ENCODE measurements at regions of chr11 and their contacts with region 1.

Region 1: GRCh38 chr11:62081378-62082291 is 42.2 kb upstream of the INCENP start:
- DNase-seq: peak; percentile 19
- H3K4me3 ChIP-seq: no peak overlapping the region
- H3K27me3 ChIP-seq: no peaks in the 10 kb centered on the region
- CTCF ChIP-seq: peak; percentile 87

Region 2: GRCh38 chr11:61792310-61793085 is 289.1 kb before region 1 on chr11 and contains the starts of genes FEN1 and TMEM258:
- CTCF ChIA-PET with region 1: interaction called, 32 read pairs
- POLR2A ChIA-PET with region 1: no interaction called
- DNase-seq: peak; percentile 71
- H3K4me3 ChIP-seq: peak within 1 kb of the TSS; percentile 81
- H3K27me3 ChIP-seq: no peaks in the 10 kb centered on the region
- CTCF ChIP-seq: no peak
- polyA plus RNA-seq, gene FEN1: 11.7 and 13.2 TPM in 2 replicates
- polyA plus RNA-seq, gene TMEM258: 371 and 399 TPM in 2 replicates

Region 3: DNA sequence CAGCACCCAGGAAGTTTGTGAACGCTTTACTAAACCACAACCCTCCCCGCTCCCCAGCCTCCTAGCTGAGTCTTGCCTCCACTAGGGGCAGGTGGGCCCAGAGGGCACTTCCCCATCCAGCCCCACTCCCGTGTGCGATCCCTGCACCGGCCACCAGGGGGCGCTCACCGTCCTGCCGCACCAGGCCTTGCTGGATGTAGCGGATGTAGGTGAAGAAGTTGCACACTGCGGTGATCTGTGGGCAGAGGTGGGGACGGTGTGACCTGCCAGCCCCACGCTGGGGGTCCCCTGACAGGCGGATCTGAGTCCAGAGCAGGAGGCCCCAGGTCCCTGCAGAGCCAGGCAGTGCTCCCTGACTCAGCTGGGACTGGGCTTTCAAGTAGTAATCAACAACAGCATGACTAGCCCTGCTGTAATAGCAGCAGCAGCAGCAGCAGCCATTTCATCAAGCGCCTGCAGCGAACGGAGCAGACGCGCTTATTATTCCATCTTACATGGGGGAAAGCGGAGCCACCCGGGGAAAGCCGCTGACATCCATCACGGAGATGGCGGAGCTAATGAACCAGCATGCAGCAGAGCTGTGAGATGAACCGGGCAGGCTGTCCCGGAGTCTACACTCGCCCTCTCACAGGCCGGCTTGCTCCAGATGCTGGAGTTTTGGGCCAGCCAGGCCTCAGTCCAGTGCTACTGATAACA is 182.3 kb before region 1 on chr11:
- CTCF ChIA-PET with region 1: interaction called, 183 read pairs
- POLR2A ChIA-PET with region 1: no interaction called
- DNase-seq: no peak
- H3K4me3 ChIP-seq: no peak overlapping the region
- H3K27me3 ChIP-seq: no peaks in the 10 kb centered on the region
- CTCF ChIP-seq: peak; percentile 100

Region 4: DNA sequence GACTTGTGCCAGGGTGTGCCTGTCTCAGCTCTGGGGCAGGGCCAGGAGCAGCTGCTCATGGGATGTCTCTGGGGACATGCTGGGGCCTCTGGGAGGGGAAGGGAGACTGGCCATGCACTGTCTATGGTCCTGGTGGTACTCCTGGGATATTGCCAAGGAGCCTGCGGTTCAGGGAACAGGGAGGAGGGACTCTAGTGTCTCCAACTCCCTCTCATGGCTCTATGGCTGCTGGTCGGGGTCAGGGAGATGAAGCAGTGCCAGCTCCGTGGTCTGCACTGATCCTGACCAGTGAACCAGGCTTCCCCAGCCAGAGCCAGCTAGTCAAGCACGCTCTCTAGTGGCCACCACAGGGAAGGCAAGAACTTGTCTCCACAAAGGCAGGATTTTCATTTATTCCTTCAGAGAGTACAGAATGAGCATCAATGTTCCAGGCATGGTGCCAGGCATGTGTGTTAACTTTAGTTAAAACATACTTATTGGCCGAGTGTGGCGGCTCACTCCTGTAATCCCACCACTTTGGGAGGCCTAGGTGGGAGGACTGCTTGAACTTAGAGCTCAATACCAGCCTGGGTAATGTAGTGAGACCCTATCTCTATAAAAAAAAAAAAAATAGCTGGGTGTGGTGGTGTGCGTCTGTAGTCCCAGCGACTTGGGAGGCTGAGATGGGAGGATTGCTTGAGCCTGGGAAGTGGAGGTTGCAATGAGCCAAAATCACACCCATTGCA is 134.0 kb before region 1 on chr11:
- CTCF ChIA-PET with region 1: interaction called, 62 read pairs
- POLR2A ChIA-PET with region 1: no interaction called
- DNase-seq: no peak
- H3K4me3 ChIP-seq: no peak overlapping the region
- H3K27me3 ChIP-seq: peaks cover 2% of the 10 kb centered on the region
- CTCF ChIP-seq: peak; percentile 98

Region 5: GRCh38 chr11:61972672-61973475 is 108.8 kb before region 1 on chr11:
- CTCF ChIA-PET with region 1: interaction called, 42 read pairs
- POLR2A ChIA-PET with region 1: interaction called, 7 read pairs
- DNase-seq: peak; percentile 89
- H3K4me3 ChIP-seq: no peak overlapping the region
- H3K27me3 ChIP-seq: no peaks in the 10 kb centered on the region
- CTCF ChIP-seq: no peak

Region 6: GRCh38 chr11:62108017-62108750 is 26.5 kb after region 1 on chr11:
- CTCF ChIA-PET with region 1: interaction called, 42 read pairs
- POLR2A ChIA-PET with region 1: no interaction called
- DNase-seq: no peak
- H3K4me3 ChIP-seq: no peak overlapping the region
- H3K27me3 ChIP-seq: no peaks in the 10 kb centered on the region
- CTCF ChIP-seq: peak; percentile 72